ENCODE measurements at regions of chr2 and their contacts with region 1.

Region 1: GRCh38 chr2:240566203-240567136 is 1.8 kb upstream of the RNPEPL1 start:
- DNase-seq: peak; percentile 91
- H3K4me3 ChIP-seq: peak overlapping the region; percentile 70
- H3K27ac ChIP-seq: peak overlapping the region; percentile 73
- H3K4me1 ChIP-seq: peaks cover 21% of the 10 kb centered on the region
- H3K27me3 ChIP-seq: no peaks in the 10 kb centered on the region
- CTCF ChIP-seq: peak; percentile 79

Region 2: GRCh38 chr2:240586198-240586918 is 19.9 kb after region 1 on chr2 and contains the start of gene CAPN10:
- CTCF ChIA-PET with region 1: interaction called, 14 read pairs
- POLR2A ChIA-PET with region 1: interaction called, 5 read pairs
- intact Hi-C with region 1: loop called (anchors 1 kb)
- DNase-seq: peak; percentile 98
- H3K4me3 ChIP-seq: peak within 1 kb of the TSS; percentile 96
- H3K27ac ChIP-seq: peak within 1 kb of the TSS; percentile 97
- H3K4me1 ChIP-seq: peaks cover 29% of the 10 kb centered on the region
- H3K27me3 ChIP-seq: no peaks in the 10 kb centered on the region
- CTCF ChIP-seq: no peak
- total RNA-seq, gene CAPN10: 43.4 and 43.5 TPM in 2 replicates